ENCODE measurements at regions of chr6 and their contacts with region 1.

Region 1: DNA sequence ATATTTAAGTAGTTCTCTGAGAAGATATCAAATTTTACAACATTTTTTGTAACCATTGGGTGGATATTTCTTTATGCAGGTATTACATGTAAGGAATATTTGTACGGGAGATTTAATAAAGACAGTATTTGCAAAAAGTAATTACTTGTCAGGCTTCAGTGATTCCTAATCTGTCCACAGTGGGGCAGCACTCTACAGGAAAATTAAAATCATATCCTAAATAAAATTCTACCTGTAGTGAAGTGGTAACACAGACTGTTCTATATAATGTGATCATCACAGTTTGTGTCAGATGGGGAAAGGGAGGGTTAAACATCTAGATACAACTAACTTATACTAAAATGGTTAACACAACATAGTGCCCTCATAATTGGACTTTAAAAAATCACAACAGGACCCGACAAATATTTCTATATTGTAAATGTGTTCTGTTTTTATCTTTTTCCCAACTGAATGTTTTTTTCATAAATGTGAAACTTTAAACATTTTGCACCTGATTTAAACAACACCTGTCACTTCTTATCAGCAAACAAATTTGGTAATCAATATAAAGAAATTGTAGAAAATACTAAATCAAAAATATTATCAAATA is 145.6 kb upstream of the MANEA start:
- DNase-seq: peak; percentile 45
- H3K4me3 Mint-ChIP-seq: no peak overlapping the region
- H3K27ac Mint-ChIP-seq: no peak overlapping the region
- H3K4me1 Mint-ChIP-seq: no peaks in the 10 kb centered on the region
- H3K27me3 Mint-ChIP-seq: peaks cover 22% of the 10 kb centered on the region
- CTCF ChIP-seq: peak; percentile 59

Region 2: DNA sequence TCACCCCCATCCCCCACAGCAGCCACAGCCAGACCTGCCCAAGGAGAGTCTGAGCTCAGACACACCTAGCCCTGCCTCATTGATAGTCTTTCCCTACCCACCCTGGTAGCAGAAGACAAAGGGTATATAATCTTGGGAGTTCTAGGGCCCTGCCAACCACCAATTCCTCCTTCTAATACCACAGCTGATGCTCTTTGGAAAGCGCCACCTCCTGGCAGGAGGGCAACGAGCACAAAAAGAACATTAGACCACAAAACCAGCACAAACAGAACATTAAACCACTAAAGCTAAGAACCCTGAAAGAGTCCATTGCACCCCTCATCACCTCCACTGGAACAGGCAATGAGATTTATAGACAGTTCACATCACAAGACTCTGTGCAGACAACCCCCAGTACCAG is 388.2 kb after region 1 on chr6:
- CTCF ChIA-PET with region 1: no interaction called
- POLR2A ChIA-PET with region 1: no interaction called
- intact Hi-C with region 1: loop called (anchors 1 kb)
- DNase-seq: peak; percentile 23
- H3K4me3 Mint-ChIP-seq: no peak overlapping the region
- H3K27ac Mint-ChIP-seq: no peak overlapping the region
- H3K4me1 Mint-ChIP-seq: no peaks in the 10 kb centered on the region
- H3K27me3 Mint-ChIP-seq: no peaks in the 10 kb centered on the region
- CTCF ChIP-seq: no peak

Region 3: DNA sequence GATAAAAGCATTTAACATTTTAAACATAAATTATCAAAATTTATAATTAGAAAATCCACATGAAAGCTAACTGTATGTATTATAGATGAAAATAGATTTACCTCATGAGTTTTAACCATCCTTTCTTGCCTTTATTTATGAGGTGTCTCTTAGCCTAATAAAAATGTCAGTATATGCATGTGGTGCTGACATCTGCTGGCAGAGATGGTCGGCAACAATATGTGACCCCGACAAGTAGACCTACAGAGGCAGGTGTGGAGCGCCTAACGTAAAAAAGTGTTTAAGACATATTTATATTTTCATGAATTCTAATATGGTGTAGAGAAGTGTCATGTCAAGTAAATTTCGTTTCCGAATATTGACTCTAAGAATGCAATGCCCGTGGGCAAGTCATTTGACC is 435.0 kb after region 1 on chr6:
- CTCF ChIA-PET with region 1: interaction called, 10 read pairs
- POLR2A ChIA-PET with region 1: no interaction called
- intact Hi-C with region 1: loop called (anchors 2 kb)
- DNase-seq: peak; percentile 14
- H3K4me3 Mint-ChIP-seq: no peak overlapping the region
- H3K27ac Mint-ChIP-seq: no peak overlapping the region
- H3K4me1 Mint-ChIP-seq: no peaks in the 10 kb centered on the region
- H3K27me3 Mint-ChIP-seq: peaks cover 16% of the 10 kb centered on the region
- CTCF ChIP-seq: peak; percentile 21

Region 4: GRCh38 chr6:95923518-95923917 is 491.8 kb after region 1 on chr6:
- CTCF ChIA-PET with region 1: no interaction called
- POLR2A ChIA-PET with region 1: no interaction called
- intact Hi-C with region 1: loop called (anchors 2 kb)
- DNase-seq: peak; percentile 41
- H3K4me3 Mint-ChIP-seq: no peak overlapping the region
- H3K27ac Mint-ChIP-seq: no peak overlapping the region
- H3K4me1 Mint-ChIP-seq: no peaks in the 10 kb centered on the region
- H3K27me3 Mint-ChIP-seq: peaks cover 44% of the 10 kb centered on the region
- CTCF ChIP-seq: peak; percentile 25

Region 5: DNA sequence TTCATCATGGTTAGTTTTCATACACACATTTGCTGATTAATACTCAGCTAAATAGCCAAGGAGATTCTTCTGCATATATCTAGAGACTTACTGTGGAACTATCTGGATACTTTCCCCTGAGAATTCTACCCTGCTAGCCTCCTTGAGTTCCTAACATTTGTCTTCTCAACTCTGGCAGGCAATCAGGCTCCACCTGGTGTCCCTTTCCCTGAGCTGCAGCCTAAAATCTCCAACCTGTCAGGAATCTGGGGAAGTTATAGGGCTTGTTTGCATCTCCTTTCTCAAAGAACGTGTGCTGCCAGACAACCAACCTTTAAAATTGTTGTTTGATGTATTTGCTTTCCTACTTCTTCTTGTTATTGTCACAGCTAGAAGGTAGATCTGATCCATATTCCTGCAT is 657.4 kb after region 1 on chr6:
- CTCF ChIA-PET with region 1: interaction called, 8 read pairs
- POLR2A ChIA-PET with region 1: interaction called, 3 read pairs
- intact Hi-C with region 1: loop called (anchors 1 kb)
- DNase-seq: peak; percentile 29
- H3K4me3 Mint-ChIP-seq: no peak overlapping the region
- H3K27ac Mint-ChIP-seq: no peak overlapping the region
- H3K4me1 Mint-ChIP-seq: no peaks in the 10 kb centered on the region
- H3K27me3 Mint-ChIP-seq: peaks cover 32% of the 10 kb centered on the region
- CTCF ChIP-seq: peak; percentile 45

Region 6: DNA sequence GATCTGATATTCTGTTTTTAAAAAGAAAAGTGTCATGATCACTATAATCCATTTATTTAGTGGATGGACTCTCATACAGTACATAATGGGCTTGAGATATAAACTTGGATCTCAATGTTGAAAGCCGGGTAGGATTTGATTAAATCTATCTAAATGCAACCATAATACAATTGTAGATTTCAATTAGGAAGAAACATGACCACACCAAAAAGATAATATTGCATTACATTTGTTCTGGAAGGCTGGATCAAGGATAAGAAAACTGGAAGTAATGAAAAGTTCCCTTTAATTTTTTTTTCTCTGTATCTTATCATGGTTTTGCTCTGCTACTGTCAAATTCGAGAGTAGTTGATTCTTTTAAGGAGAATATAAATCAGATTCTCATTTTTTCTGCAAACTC is 1038.6 kb after region 1 on chr6:
- CTCF ChIA-PET with region 1: no interaction called
- POLR2A ChIA-PET with region 1: no interaction called
- intact Hi-C with region 1: loop called (anchors 5 kb)
- DNase-seq: no peak
- H3K4me3 Mint-ChIP-seq: no peak overlapping the region
- H3K27ac Mint-ChIP-seq: no peak overlapping the region
- H3K4me1 Mint-ChIP-seq: no peaks in the 10 kb centered on the region
- H3K27me3 Mint-ChIP-seq: peaks cover 32% of the 10 kb centered on the region
- CTCF ChIP-seq: no peak

Measured in MCF 10A (cell line).